ENCODE measurements at regions of chr22 and their contacts with region 1.

Region 1: GRCh38 chr22:20116951-20117645 is at the start of gene TRMT2A:
- DNase-seq: peak; percentile 98
- H3K4me3 ChIP-seq: peak within 1 kb of the TSS; percentile 84 to 96 (median 95)
- H3K27ac ChIP-seq: peak within 1 kb of the TSS; percentile 66
- H3K4me1 ChIP-seq: peaks cover 23% of the 10 kb centered on the region
- H3K27me3 ChIP-seq: no peaks in the 10 kb centered on the region
- CTCF ChIP-seq: peak in 1 of 2 donors; percentile 31
- total RNA-seq, gene TRMT2A: 30.3 to 42.6 TPM

Region 2: GRCh38 chr22:19970479-19971275 is 146.4 kb before region 1 on chr22:
- CTCF ChIA-PET with region 1: no interaction called
- dilution Hi-C with region 1: no loop called
- in situ Hi-C with region 1: loop called in 1 of 2 experiments (anchors 10 kb)
- intact Hi-C with region 1: no loop called
- DNase-seq: no peak
- H3K4me3 ChIP-seq: no peak overlapping the region
- H3K27ac ChIP-seq: no peak overlapping the region
- H3K4me1 ChIP-seq: peaks cover 11% of the 10 kb centered on the region
- H3K27me3 ChIP-seq: no peaks in the 10 kb centered on the region
- CTCF ChIP-seq: peak; percentile 58 to 89

Region 3: GRCh38 chr22:20020533-20021195 is 96.4 kb before region 1 on chr22 and contains the start of gene TANGO2:
- CTCF ChIA-PET with region 1: no interaction called
- dilution Hi-C with region 1: loop called (anchors 5 kb)
- in situ Hi-C with region 1: no loop called
- intact Hi-C with region 1: no loop called
- DNase-seq: peak; percentile 89
- H3K4me3 ChIP-seq: peak within 1 kb of the TSS; percentile 82 to 90 (median 85)
- H3K27ac ChIP-seq: peak within 1 kb of the TSS; percentile 33
- H3K4me1 ChIP-seq: peaks cover 23% of the 10 kb centered on the region
- H3K27me3 ChIP-seq: no peaks in the 10 kb centered on the region
- CTCF ChIP-seq: no peak
- total RNA-seq, gene TANGO2: 22.5 to 45.7 TPM

Region 4: GRCh38 chr22:20174785-20175596 is 57.9 kb after region 1 on chr22:
- CTCF ChIA-PET with region 1: no interaction called
- dilution Hi-C with region 1: loop called (anchors 5 kb)
- in situ Hi-C with region 1: no loop called
- intact Hi-C with region 1: no loop called
- DNase-seq: no peak
- H3K4me3 ChIP-seq: no peak overlapping the region
- H3K27ac ChIP-seq: no peak overlapping the region
- H3K4me1 ChIP-seq: no peaks in the 10 kb centered on the region
- H3K27me3 ChIP-seq: peaks cover 2% of the 10 kb centered on the region
- CTCF ChIP-seq: peak in 1 of 2 donors; percentile 7

Region 5: GRCh38 chr22:20279662-20280134 is 162.6 kb after region 1 on chr22:
- CTCF ChIA-PET with region 1: no interaction called
- dilution Hi-C with region 1: loop called (anchors 5 kb)
- in situ Hi-C with region 1: no loop called
- intact Hi-C with region 1: no loop called
- DNase-seq: no peak
- H3K4me3 ChIP-seq: no peak overlapping the region
- H3K27ac ChIP-seq: no peak overlapping the region
- H3K4me1 ChIP-seq: no peaks in the 10 kb centered on the region
- H3K27me3 ChIP-seq: no peaks in the 10 kb centered on the region
- CTCF ChIP-seq: no peak

Measured in mammary epithelial cell (primary cell).